ENCODE measurements at regions of chr15 and their contacts with region 1.

Region 1: GRCh38 chr15:48285329-48286214 is 45.7 kb upstream of the DUT start:
- DNase-seq: peak; percentile 38 to 60 (median 54)
- H3K4me3 ChIP-seq: no peak overlapping the region
- H3K4me3 Mint-ChIP-seq: no peak overlapping the region
- H3K27ac ChIP-seq: no peak overlapping the region
- H3K27ac Mint-ChIP-seq: no peak overlapping the region
- H3K4me1 ChIP-seq: no peaks in the 10 kb centered on the region
- H3K4me1 Mint-ChIP-seq: peaks cover 5% of the 10 kb centered on the region
- H3K27me3 ChIP-seq: no peaks in the 10 kb centered on the region
- H3K27me3 Mint-ChIP-seq: peaks cover under 1 to 6% (median 5%) of the 10 kb centered on the region in 3 donors
- CTCF ChIP-seq: peak; percentile 79

Region 2: DNA sequence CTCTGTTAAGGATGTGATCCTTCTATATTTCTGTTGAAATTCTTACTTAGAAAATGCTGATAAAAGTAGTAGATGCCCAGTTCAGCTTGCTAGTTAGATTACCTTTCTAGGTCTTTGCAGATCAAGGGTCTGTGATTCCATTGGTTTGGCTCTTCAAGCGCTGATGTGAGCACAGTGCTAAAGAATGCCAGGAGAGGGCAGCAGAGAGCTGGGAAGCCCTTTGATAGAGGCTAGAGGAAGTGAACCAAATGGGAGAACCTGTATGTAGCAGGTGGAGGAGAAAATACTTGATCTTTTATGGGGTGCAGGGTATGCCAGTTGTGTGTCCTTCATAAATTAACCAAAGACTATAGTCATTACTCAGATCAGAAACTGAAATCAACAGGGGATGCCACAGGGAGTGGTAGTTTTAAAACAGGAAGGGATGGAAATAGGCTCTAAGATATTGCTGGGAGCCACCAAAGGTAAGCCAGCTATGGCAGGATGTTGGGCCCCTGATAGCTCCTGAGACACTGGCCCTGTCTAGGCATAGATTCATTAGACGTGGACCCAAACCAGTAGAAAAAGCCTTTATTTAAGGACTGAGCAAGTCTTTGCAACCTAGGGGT is 1973.3 kb before region 1 on chr15:
- intact Hi-C with region 1: loop called in 1 of 2 experiments (anchors 10 kb)
- DNase-seq: peak; percentile 9 to 30 (median 26)
- H3K4me3 ChIP-seq: no peak overlapping the region
- H3K4me3 Mint-ChIP-seq: no peak overlapping the region
- H3K27ac ChIP-seq: no peak overlapping the region
- H3K27ac Mint-ChIP-seq: no peak overlapping the region
- H3K4me1 ChIP-seq: no peaks in the 10 kb centered on the region
- H3K4me1 Mint-ChIP-seq: no peaks in the 10 kb centered on the region
- H3K27me3 ChIP-seq: no peaks in the 10 kb centered on the region
- H3K27me3 Mint-ChIP-seq: peaks cover 0 to 4% (median 2%) of the 10 kb centered on the region in 3 donors
- CTCF ChIP-seq: peak; percentile 82

Region 3: DNA sequence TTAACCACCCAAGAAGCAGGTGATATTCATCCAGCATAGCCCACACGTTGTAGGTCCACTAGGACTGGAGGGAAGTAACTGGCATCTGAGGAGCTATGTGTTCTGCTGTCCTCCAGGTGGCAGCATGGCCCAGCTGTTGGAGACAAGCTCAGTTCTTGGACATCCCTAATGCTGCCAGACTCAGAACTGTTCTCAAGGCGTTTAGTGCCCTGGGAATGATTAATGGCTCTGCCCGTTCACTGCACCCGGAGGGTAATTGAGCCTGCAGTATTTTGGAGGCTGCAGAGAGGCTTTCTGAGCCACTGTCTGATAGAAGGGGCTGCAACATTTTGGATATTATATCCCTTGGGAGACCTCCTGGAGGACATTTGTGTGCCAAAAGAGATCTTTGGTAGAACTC is 1089.5 kb before region 1 on chr15:
- intact Hi-C with region 1: loop called in 1 of 2 experiments (anchors 10 kb)
- DNase-seq: peak; percentile 15 to 43 (median 19)
- H3K4me3 ChIP-seq: no peak overlapping the region
- H3K4me3 Mint-ChIP-seq: no peak overlapping the region
- H3K27ac ChIP-seq: no peak overlapping the region
- H3K27ac Mint-ChIP-seq: no peak overlapping the region
- H3K4me1 ChIP-seq: no peaks in the 10 kb centered on the region
- H3K4me1 Mint-ChIP-seq: no peaks in the 10 kb centered on the region
- H3K27me3 ChIP-seq: no peaks in the 10 kb centered on the region
- H3K27me3 Mint-ChIP-seq: peaks cover 5 to 14% (median 7%) of the 10 kb centered on the region in 3 donors
- CTCF ChIP-seq: peak; percentile 64

Measured in CD14-positive monocyte (primary cell).